ENCODE measurements at regions of chr11 and their contacts with region 1.

Region 1: GRCh38 chr11:47305734-47306483 is 36.0 kb downstream of the MADD start:
- DNase-seq: peak; percentile 82
- ATAC-seq: peak; percentile 97

Region 2: GRCh38 chr11:47233989-47234668 is 71.8 kb before region 1 on chr11:
- intact Hi-C with region 1: no loop called
- DNase-seq: peak; percentile 50
- ATAC-seq: peak; percentile 87

Region 3: GRCh38 chr11:47269829-47270305 is 36.0 kb before region 1 on chr11 and contains the start of gene MADD:
- intact Hi-C with region 1: loop called (anchors 5 kb)
- DNase-seq: peak; percentile 92
- ATAC-seq: peak; percentile 94
- total RNA-seq, gene MADD: 39.7 TPM